Adrenal gland (tissue), 19 donors: ENCODE measurements at regions of chr2 and their contacts with region 1.

Region 1: DNA sequence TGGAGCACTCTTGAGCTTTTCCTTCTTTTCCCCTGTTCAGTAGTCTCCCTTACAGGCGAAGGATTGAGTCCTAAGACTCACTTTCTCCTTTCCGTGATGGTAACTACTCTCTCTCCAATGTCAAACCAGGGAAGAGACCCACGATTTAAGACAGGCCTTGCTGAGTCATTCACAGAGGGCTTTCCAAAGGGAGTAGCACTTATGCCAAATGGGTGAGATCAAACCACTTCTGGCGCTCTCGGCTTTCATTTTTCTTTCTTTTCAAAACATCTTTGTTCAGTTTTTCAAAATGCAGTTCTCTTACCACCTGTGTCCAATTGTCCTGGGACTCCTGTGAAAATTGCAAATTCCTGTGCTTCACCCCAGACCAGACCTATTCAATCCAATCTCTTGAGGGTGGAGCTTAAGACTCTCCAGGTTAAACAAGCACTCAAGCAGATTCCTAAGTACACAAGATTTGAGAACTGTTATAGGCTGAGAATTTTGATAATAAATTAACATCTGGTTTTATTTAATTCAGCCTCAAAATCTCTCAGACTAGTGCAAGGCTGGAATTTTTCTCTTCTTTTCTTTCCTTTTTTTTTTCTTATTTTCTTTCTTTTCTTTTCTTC is 14.4 kb upstream of the MRPL19 start:
- DNase-seq: peak in 3 of 7 donors; percentile 22 to 39 (median 23)
- H3K4me3 ChIP-seq: no peak overlapping the region
- H3K27ac ChIP-seq: peak overlapping the region in 4 of 5 donors; percentile 37 to 58 (median 53)
- H3K4me1 ChIP-seq: peaks cover 5 to 19% of the 10 kb centered on the region in 2 donors
- H3K27me3 ChIP-seq: no peaks in the 10 kb centered on the region
- CTCF ChIP-seq: no peak
- POLR2A ChIP-seq: no peak

Region 2: GRCh38 chr2:75680402-75680801 is 48.2 kb after region 1 on chr2:
- intact Hi-C with region 1: loop called in 1 of 2 experiments (anchors 10 kb)
- DNase-seq: no peak
- H3K4me3 ChIP-seq: no peak overlapping the region
- H3K27ac ChIP-seq: no peak overlapping the region
- H3K4me1 ChIP-seq: no peaks in the 10 kb centered on the region
- H3K27me3 ChIP-seq: no peaks in the 10 kb centered on the region
- CTCF ChIP-seq: no peak
- POLR2A ChIP-seq: no peak